Esophagus muscularis mucosa (tissue), 4 donors: ENCODE measurements at regions of chr11 and their contacts with region 1.

Region 1: DNA sequence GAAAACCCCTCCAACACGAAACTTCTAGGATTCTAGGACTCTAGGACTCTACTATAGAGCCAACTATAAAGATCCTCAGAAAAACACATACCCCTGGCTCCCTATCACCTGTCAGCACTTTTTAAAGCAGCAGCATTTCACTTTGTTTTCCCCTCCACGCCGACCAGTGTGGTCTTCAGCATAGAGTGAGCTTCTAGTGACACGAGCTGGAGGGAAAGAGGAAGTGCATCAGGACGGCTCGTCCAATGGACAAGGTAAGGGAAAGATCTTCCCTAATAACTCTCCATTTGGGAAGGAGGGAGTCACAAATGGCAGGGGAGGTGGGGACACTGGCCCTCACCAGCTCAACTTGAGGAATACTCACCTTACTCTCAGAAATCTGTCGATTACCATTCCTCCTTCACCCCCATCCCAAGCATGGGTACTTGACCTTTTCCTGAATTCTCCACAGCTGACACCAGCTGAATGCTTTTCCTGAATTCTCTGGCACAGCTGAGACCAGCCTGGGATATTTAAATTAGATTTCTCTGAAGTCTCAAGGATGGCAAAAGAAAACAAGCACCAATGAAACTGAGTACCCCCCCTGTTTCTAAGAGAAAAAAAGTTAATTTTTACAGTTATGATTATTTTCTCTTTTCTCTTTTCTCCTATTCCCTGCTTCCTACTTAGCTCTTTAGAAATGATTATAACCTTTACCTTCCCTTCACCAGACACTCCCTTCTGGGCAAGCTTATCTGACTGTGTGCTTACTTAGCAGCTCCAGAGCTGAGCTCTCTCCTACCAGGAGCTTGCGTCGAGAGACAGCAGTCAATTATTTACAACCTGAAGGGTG is 33.3 kb upstream of the NNMT start:
- DNase-seq: no peak
- H3K4me3 ChIP-seq: no peak overlapping the region
- H3K27ac ChIP-seq: peak overlapping the region in 1 of 4 donors; percentile 79
- H3K4me1 ChIP-seq: peaks cover 35 to 58% (median 43%) of the 10 kb centered on the region in 4 donors
- H3K27me3 ChIP-seq: peaks cover 0 to 43% (median 2%) of the 10 kb centered on the region in 4 donors
- CTCF ChIP-seq: peak; percentile 54 to 69 (median 69)
- EP300 ChIP-seq: no peak
- POLR2A ChIP-seq: no peak

Region 2: DNA sequence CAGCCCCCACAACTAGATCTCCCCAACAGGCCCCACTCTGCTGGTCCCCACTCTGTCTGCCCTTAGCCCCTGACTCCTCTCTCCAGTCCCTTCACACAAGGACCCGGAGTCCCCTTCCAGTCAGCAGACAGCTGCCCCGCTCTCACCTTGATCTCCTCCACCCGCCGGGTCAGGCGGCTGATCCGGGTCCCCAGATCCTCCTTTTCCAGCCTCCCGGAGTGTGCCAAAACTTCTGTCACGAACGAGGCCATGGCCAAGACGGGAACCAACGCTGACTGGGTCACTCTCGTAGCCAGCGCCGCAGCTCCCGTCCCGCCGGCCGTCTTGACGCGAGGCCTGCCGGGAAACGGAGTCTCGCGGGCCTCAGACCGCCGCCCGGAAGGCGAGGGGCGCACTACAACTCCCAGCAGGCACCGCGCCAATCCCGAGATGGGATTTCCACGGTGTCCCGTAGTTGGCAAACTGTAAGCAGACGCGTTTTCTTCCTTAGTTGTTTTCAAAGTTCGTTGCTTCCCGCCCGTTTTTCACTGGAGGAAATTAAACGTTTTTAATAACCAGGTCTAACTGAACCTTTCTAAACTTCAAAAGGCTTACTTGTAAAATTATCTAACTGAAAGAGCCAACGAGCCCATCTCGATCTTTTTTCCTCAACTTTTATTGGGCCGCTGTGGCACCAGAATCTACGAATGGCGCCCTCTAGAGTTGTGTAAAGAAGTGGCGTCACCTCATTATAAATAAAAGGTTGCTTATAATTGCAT is 489.3 kb before region 1 on chr11 and contains the start of gene ZW10:
- intact Hi-C with region 1: loop called (anchors 10 kb)
- DNase-seq: peak; percentile 98
- H3K4me3 ChIP-seq: peak within 1 kb of the TSS; percentile 72 to 87 (median 82)
- H3K27ac ChIP-seq: peak within 1 kb of the TSS; percentile 84 to 88 (median 88)
- H3K4me1 ChIP-seq: peaks cover 16 to 34% (median 30%) of the 10 kb centered on the region in 4 donors
- H3K27me3 ChIP-seq: no peaks in the 10 kb centered on the region
- CTCF ChIP-seq: peak; percentile 79 to 89 (median 83)
- EP300 ChIP-seq: no peak
- POLR2A ChIP-seq: no peak
- total RNA-seq, gene ZW10: 8.8 to 10.9 (median 9.4) TPM

Region 3: GRCh38 chr11:113896156-113896879 is 366.6 kb before region 1 on chr11:
- intact Hi-C with region 1: loop called (anchors 5 kb)
- DNase-seq: no peak
- H3K4me3 ChIP-seq: no peak overlapping the region
- H3K27ac ChIP-seq: no peak overlapping the region
- H3K4me1 ChIP-seq: peaks cover 0 to 5% (median 0%) of the 10 kb centered on the region in 4 donors
- H3K27me3 ChIP-seq: no peaks in the 10 kb centered on the region
- CTCF ChIP-seq: peak; percentile 53 to 89 (median 72)
- EP300 ChIP-seq: no peak
- POLR2A ChIP-seq: no peak

Region 4: DNA sequence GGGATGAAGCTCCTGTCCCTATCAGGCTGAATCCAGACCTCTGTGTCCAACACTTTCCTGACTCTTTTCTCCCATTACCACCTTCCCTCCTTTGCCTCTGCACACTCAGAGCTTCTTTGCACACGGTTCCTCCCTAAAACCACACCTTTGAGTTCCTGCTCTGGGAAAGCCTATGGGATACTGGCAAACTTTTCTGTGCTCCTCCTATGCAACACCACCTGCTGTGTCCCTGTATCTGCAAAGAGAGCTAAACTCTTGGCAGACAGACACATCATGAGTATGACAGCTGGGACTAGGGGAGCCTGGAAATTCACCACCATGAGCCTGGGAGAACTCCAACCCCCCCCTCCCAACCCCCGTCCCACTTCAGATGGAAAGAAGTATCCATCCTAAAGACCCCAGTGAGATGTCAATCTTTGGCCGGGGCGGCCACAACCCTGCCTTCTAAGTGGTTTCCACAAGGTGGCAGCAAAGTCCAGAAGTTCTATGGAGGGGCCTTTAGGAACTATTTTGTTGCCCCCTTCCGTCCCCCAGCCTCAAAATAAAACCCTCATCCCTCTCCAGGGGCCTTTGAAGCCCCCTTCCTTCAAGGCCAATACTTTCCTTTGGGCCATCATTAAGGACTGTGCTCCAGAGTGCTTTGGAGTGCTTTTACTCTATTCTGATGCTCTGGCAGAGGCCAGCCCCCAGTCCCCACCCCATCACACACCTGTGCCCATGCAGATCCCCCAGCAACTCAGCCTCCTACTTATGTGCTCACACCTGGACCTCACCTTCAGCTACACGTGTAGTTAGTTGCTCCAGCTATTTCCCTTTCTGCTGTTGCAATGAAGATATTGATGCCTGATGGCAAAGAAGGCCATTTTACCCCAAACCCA is 268.6 kb before region 1 on chr11:
- intact Hi-C with region 1: loop called (anchors 5 kb)
- DNase-seq: no peak
- H3K4me3 ChIP-seq: no peak overlapping the region
- H3K27ac ChIP-seq: no peak overlapping the region
- H3K4me1 ChIP-seq: peaks cover 0 to 7% (median 0%) of the 10 kb centered on the region in 4 donors
- H3K27me3 ChIP-seq: peaks cover 0 to 79% (median 10%) of the 10 kb centered on the region in 4 donors
- CTCF ChIP-seq: peak; percentile 65 to 79 (median 67)
- EP300 ChIP-seq: no peak
- POLR2A ChIP-seq: no peak

Region 5: DNA sequence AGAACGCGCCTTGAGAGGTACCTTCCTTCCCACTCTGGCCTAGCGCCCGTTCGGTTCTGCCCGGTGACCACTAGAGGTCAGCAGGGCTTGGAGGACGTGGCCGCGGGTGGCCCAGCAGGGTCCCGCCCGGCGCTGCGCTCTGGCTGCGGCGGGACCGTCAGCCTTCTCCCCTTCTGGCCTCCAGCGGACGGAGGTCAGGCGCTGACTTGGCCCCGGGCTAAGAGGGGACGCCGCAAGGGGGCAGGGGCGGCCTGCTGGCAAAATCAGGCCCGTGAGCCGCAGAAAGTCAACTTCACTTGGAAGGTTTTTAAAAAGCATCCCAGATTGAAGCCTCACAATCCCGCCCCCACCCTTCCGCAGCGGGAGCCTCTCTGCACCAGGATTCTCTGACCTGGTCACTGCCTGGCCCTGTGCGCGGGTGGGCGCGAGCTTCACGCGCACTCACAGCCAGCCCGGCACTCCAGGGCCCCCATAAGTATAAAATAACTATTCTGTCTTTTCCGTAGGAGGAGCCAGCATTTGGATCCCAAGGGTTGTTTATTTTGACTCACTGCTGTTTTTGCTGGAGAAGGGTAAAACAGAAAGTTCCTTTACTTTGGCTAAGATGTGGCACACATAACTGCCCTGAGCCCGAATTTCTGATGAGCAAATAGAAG is 226.6 kb before region 1 on chr11:
- intact Hi-C with region 1: loop called (anchors 2 kb)
- DNase-seq: peak; percentile 95
- H3K4me3 ChIP-seq: peak overlapping the region; percentile 49 to 53 (median 52)
- H3K27ac ChIP-seq: peak overlapping the region; percentile 58 to 70 (median 66)
- H3K4me1 ChIP-seq: peaks cover 9 to 26% (median 25%) of the 10 kb centered on the region in 4 donors
- H3K27me3 ChIP-seq: peaks cover 0 to 10% (median 0%) of the 10 kb centered on the region in 4 donors
- CTCF ChIP-seq: peak; percentile 82 to 90 (median 88)
- EP300 ChIP-seq: no peak
- POLR2A ChIP-seq: no peak

Region 6: GRCh38 chr11:114059278-114059983 is 203.5 kb before region 1 on chr11 and contains the start of gene ZBTB16:
- intact Hi-C with region 1: loop called (anchors 2 kb)
- DNase-seq: peak; percentile 96
- H3K4me3 ChIP-seq: peak within 1 kb of the TSS; percentile 96 to 99 (median 99)
- H3K27ac ChIP-seq: peak within 1 kb of the TSS; percentile 96 to 100 (median 99)
- H3K4me1 ChIP-seq: peaks cover 39 to 51% (median 47%) of the 10 kb centered on the region in 4 donors
- H3K27me3 ChIP-seq: no peaks in the 10 kb centered on the region
- CTCF ChIP-seq: peak; percentile 60 to 75 (median 65)
- EP300 ChIP-seq: no peak
- POLR2A ChIP-seq: peak; percentile 85
- total RNA-seq, gene ZBTB16: 175 to 319 (median 222) TPM

Region 7: DNA sequence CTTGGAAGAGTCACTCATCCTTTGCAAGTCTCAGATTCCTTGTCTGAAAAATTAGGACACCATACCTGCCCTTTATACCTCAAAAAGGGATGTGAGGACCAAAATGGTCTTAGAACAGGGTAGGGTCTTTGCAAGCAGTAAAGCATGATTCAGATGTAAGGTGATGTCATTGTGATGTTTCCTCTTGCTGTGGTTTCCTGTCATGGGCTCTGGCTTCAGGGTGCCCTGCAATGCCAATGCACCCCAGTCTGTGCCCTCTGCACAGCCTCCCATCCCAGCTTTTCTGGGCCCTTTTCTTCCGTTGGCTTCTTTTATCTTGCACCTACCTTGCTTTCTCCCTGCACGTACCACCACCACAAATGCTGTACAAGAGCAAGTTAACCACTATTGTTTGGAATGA is 54.5 kb before region 1 on chr11:
- intact Hi-C with region 1: no loop called
- DNase-seq: no peak
- H3K4me3 ChIP-seq: no peak overlapping the region
- H3K27ac ChIP-seq: no peak overlapping the region
- H3K4me1 ChIP-seq: peaks cover 40 to 92% (median 77%) of the 10 kb centered on the region in 4 donors
- H3K27me3 ChIP-seq: no peaks in the 10 kb centered on the region
- CTCF ChIP-seq: no peak
- EP300 ChIP-seq: no peak
- POLR2A ChIP-seq: no peak